Transverse colon (tissue), 4 donors: ENCODE measurements at regions of chr17 and their contacts with region 1.

Region 1: GRCh38 chr17:76681222-76682137 is 29.3 kb downstream of the MXRA7 start:
- DNase-seq: peak; percentile 84
- H3K4me3 ChIP-seq: no peak overlapping the region
- H3K27ac ChIP-seq: peak overlapping the region; percentile 17 to 89 (median 71)
- H3K4me1 ChIP-seq: peaks cover 12 to 52% (median 36%) of the 10 kb centered on the region in 4 donors
- H3K27me3 ChIP-seq: no peaks in the 10 kb centered on the region
- CTCF ChIP-seq: peak; percentile 72 to 88 (median 79)
- EP300 ChIP-seq: no peak
- POLR2A ChIP-seq: no peak

Region 2: DNA sequence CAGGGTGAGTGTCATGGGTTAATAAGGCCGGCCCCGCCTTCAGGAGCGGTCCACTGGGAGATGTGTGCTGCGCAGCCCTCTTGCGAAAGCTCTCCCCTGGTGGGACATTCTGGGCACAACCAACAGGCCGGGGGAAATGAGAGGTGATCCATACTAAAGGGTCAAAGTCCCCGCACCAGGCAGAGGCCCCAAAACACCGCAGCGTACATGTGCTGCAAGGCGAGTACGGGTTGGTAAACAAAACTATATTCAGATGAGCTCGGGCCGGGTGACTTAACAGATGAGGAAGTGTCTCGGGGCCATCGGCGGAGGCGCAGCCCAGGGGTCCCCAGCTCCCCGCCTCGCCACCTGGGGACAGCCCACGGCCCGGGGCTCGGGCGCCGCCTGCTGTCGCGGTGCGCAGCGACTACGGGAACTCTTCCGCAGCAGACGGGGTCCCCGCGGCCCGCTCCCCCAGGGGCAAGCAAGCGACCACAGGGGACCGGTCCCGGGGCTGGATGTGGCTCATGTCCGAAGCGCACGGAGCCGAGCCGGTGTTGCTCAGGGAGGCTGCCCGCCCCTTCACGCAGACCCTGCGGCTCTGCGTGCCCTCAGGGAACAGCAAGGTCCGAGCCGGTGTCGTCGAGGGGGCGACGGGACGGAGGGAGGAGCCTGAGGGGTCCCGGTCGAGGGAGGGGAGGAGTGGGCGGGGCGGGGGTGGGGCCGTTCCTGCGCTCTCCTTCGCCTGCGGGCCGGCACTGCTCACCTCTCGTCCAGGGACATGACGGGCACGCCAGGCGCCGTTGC is 1944.8 kb before region 1 on chr17 and contains the start of gene RAB37:
- in situ Hi-C with region 1: no loop called
- intact Hi-C with region 1: no loop called
- DNase-seq: peak; percentile 59
- H3K4me3 ChIP-seq: peak within 1 kb of the TSS; percentile 8 to 49 (median 25)
- H3K27ac ChIP-seq: peak within 1 kb of the TSS; percentile 47 to 72 (median 62)
- H3K4me1 ChIP-seq: peaks cover 10 to 31% (median 29%) of the 10 kb centered on the region in 4 donors
- H3K27me3 ChIP-seq: peaks cover 47% of the 10 kb centered on the region
- CTCF ChIP-seq: peak in 4 of 5 experiments; percentile 33 to 51 (median 44)
- EP300 ChIP-seq: no peak
- POLR2A ChIP-seq: peak; percentile 40
- total RNA-seq, gene RAB37: 5.2 to 10.5 (median 5.4) TPM in 3 of 4 donors, not detected in the other

Region 3: DNA sequence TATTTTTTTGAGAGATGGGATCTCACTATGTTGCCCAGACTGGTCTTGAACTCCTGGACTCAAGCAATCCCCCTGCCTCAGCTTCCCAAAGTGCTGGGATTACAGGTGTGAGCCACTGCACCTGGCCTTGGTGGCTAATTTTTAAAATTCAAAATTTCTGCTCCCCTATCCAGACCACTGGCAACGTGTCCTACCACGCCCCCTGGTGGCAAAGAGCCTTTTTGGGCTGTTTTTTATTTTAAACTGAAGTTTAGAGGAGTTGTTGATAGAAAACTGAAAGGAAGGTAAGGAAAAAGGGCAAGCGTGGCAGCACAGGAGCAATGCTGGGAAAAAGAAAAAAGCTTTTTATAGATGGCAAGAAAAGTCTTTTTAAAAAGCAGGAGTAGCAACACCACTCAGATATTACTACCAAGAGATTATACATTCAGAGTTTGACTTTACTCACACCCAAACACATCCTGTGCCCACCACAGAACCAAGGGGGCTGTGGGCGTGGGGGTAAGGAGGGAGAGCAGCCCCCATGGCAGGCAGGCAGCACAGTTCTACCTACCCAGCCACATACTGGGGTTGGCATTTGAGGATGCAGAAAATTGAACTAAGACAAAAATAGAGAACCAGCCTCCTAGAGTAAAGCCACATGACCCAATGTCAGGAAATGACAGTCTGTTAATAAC is 33.5 kb after region 1 on chr17:
- in situ Hi-C with region 1: no loop called
- intact Hi-C with region 1: loop called (anchors 5 kb)
- DNase-seq: peak; percentile 68
- H3K4me3 ChIP-seq: no peak overlapping the region
- H3K27ac ChIP-seq: peak overlapping the region in 3 of 4 donors; percentile 18 to 58 (median 44)
- H3K4me1 ChIP-seq: peaks cover 8 to 36% (median 13%) of the 10 kb centered on the region in 4 donors
- H3K27me3 ChIP-seq: no peaks in the 10 kb centered on the region
- CTCF ChIP-seq: peak; percentile 75 to 83 (median 81)
- EP300 ChIP-seq: no peak
- POLR2A ChIP-seq: no peak